ENCODE measurements at regions of chr10 and their contacts with region 1.

Region 1: DNA sequence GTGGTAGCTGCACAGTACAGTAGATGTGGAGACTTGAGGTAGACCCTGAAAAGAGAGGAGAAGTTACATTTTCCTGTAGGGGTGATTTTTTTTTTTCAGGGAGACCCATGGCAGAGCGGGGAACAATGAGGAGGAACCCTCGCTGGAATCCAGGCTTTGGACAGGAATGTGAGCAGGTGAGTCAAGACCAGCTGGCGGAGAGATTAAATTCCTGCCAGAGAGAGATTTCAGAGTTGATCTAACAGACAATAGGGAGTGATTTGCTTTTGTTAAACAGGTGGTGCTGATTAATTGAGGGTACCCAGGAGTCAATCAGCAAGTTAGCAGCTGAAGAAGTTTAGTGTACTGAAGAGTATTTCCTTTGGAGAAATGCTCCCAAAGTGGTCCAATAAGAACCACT is 41.6 kb upstream of the MINDY3 start:
- DNase-seq: no peak
- ATAC-seq: no peak
- H3K4me3 Mint-ChIP-seq: no peak overlapping the region
- H3K27ac Mint-ChIP-seq: no peak overlapping the region
- H3K4me1 Mint-ChIP-seq: no peaks in the 10 kb centered on the region
- H3K27me3 Mint-ChIP-seq: peaks cover 18% of the 10 kb centered on the region

Region 2: DNA sequence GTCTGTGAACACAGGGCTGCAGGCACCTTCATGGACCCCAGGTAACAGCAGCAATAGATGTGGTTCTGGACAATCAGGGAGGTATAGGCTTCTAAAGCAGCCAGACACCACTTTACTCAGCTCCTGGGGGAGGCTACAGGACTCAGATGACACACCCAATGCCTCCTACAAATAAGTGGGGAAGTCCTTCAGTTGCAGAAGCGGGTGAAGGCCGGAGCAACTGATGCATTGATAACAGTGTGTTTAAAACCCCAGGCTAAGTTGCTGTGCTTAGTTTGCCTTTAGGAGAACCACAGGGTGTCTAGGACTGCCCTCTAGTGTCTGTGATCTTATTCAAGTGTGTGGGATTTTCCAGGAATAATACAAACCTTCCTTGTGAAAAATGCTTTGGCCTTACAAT is 176.3 kb before region 1 on chr10:
- CTCF ChIA-PET with region 1: no interaction called
- POLR2A ChIA-PET with region 1: no interaction called
- intact Hi-C with region 1: no loop called
- DNase-seq: no peak
- ATAC-seq: no peak
- H3K4me3 Mint-ChIP-seq: no peak overlapping the region
- H3K27ac Mint-ChIP-seq: no peak overlapping the region
- H3K4me1 Mint-ChIP-seq: no peaks in the 10 kb centered on the region
- H3K27me3 Mint-ChIP-seq: peaks cover 16% of the 10 kb centered on the region

Region 3: GRCh38 chr10:15879058-15879457 is 22.8 kb before region 1 on chr10:
- CTCF ChIA-PET with region 1: interaction called, 13 read pairs
- POLR2A ChIA-PET with region 1: no interaction called
- intact Hi-C with region 1: no loop called
- DNase-seq: no peak
- ATAC-seq: no peak
- H3K4me3 Mint-ChIP-seq: no peak overlapping the region
- H3K27ac Mint-ChIP-seq: no peak overlapping the region
- H3K4me1 Mint-ChIP-seq: no peaks in the 10 kb centered on the region
- H3K27me3 Mint-ChIP-seq: peaks cover 28% of the 10 kb centered on the region

Region 4: DNA sequence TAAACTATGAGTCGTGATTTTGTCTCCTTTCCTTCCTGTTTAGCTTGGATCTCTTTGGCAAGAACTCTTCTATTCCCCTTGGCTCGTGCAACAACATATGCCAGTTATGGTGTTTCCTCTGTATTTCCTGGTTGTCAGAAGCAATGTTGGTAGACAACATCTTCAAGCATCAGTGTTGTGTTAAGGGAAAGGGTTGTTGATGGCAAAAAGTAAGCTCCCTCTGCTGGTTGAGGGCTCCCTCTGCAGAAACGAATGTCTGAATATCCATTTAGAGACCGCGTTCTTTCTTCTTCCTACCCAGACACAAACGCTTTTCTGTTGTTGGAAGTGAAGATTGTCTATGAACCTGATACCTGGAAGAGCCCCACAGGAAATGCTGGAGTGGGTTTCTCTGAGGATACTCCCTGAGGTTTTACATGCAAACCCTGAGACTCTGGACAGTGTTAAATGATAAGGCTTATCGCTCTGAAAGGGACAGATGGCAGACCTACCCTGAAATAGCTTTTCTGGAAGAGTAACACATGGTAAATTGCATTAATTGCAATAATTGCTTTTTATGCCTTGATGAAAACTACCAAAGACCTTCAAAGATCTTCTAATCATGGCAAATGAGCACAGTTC is 643.3 kb after region 1 on chr10:
- CTCF ChIA-PET with region 1: no interaction called
- POLR2A ChIA-PET with region 1: no interaction called
- intact Hi-C with region 1: loop called (anchors 1 to 10 kb)
- DNase-seq: peak; percentile 21
- ATAC-seq: no peak
- H3K4me3 Mint-ChIP-seq: no peak overlapping the region
- H3K27ac Mint-ChIP-seq: no peak overlapping the region
- H3K4me1 Mint-ChIP-seq: no peaks in the 10 kb centered on the region
- H3K27me3 Mint-ChIP-seq: peaks cover 13% of the 10 kb centered on the region

Region 5: DNA sequence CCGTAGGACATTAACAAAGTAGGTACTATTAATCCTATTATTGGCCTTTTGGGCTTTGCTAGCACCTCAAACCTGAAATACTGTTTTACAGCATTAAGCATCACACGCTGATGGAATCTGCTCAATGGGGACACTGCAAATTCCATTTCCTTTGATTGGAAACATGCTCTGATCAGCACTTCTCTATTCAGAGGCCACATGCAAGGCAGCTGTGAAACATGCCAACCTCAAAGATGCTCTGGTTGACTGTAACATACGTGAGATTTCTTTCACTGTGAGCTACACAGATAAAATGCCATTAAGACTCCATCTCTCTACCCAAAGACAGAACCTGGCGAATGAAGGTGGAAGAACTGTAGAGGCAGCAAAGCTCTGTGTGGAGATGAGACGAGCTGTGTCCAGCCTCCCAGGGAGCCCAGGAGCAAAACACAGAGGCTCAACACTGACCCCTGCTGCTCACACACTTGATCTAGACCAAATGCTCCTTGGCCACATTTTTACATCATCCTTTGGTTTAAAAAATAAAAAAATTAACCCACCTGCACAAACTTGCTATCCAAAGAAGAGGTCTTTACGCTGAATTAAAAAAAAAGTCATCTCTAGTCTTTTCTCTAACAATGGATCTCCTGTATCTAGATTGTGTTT is 907.3 kb after region 1 on chr10:
- CTCF ChIA-PET with region 1: interaction called, 7 read pairs
- POLR2A ChIA-PET with region 1: no interaction called
- intact Hi-C with region 1: loop called in 1 of 2 experiments (anchors 2 kb)
- DNase-seq: peak; percentile 79
- ATAC-seq: peak; percentile 94
- H3K4me3 Mint-ChIP-seq: no peak overlapping the region
- H3K27ac Mint-ChIP-seq: no peak overlapping the region
- H3K4me1 Mint-ChIP-seq: peaks cover 9% of the 10 kb centered on the region
- H3K27me3 Mint-ChIP-seq: no peaks in the 10 kb centered on the region

Region 6: DNA sequence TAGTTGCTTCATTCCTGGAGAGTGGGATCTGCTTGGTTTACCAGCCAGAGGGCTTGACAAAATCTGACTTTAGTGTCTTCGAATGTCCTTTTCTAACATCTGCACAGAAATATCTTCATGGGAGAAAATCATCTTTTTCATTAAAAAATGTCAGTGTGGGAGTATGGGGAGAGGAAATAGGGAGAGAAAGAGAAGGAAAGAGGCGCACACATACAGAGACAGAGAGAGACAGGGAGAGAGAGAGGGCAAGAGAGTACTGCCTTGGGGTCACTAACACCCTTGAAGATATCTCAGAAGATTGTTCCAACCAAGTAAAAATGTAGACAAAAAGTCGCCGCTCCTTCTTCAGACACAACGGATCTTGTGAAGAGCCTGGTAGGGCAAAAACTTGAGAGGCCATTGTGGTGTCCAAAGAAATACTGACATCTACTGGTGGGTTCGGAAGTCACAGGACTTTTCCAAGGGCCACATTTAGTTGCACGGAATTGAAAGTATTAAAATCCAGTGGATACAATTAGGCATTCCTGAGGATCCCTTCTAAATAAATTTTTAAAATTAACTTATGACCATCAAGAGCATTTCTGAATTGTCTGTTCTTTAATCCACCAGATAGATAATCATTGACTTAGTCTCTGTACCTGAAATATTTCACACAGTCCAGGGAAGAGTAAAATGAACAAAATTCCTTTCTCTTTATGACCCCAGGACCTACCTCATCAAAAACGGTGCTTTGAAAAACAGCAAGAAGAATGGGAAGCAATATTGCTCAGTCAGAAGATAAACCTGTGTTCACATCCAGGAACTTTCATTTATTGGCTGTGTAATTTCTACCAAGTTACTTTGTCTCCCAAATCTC is 1355.8 kb after region 1 on chr10:
- CTCF ChIA-PET with region 1: no interaction called
- POLR2A ChIA-PET with region 1: no interaction called
- intact Hi-C with region 1: loop called in 1 of 2 experiments (anchors 10 kb)
- DNase-seq: peak; percentile 66
- ATAC-seq: peak; percentile 86
- H3K4me3 Mint-ChIP-seq: peak overlapping the region; percentile 9
- H3K27ac Mint-ChIP-seq: peak overlapping the region; percentile 0
- H3K4me1 Mint-ChIP-seq: peaks cover 7% of the 10 kb centered on the region
- H3K27me3 Mint-ChIP-seq: peaks cover 3% of the 10 kb centered on the region

Measured in activated CD4-positive, alpha-beta T cell treated with anti-CD3 and anti-CD28 coated beads for 36 hours (primary cell).